ENCODE measurements at regions of chr22 and their contacts with region 1.

Region 1: DNA sequence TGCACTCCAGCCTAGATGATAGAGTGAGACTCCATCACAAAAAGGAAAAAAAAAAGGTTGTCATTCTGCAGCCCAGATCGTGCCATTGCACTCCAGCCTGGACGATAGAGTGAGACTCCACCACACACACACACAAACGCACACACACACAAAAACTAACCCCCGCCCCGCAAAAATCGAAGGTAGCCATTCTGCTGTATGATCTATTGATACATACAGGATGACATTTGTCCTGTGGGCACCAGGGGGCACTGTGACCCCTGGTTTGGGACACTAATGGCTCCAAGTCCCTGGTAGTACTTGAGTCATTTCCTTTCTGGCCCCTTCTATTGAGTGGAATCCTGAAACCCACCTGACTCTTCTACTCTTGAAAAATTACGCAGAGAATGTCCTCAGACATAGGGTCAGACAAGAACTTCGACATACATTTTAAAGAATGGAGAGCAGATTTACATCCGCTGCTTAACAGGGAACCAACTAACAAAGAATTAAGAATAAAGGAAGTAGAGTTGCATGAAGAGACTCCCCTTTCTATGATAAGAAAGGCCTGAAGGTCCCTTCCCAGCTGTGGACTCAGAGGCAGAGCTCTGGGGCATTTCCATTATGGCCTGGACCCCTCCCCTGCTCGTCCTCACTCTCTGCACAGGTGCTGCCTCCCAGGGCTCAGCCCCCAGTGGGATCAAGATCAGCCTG is 35.0 kb upstream of the PRAME start:
- DNase-seq: peak in 8 of 9 experiments; percentile 25 to 77 (median 48)
- ATAC-seq: peak; percentile 66
- H3K4me3 ChIP-seq: no peak overlapping the region
- H3K4me3 Mint-ChIP-seq: no peak overlapping the region
- H3K27ac ChIP-seq: no peak overlapping the region
- H3K27ac Mint-ChIP-seq: no peak overlapping the region
- H3K4me1 ChIP-seq: no peaks in the 10 kb centered on the region
- H3K4me1 Mint-ChIP-seq: peaks cover 4% of the 10 kb centered on the region
- H3K27me3 ChIP-seq: no peaks in the 10 kb centered on the region
- H3K27me3 Mint-ChIP-seq: peaks cover 7% of the 10 kb centered on the region
- CTCF ChIP-seq: peak; percentile 73

Region 2: DNA sequence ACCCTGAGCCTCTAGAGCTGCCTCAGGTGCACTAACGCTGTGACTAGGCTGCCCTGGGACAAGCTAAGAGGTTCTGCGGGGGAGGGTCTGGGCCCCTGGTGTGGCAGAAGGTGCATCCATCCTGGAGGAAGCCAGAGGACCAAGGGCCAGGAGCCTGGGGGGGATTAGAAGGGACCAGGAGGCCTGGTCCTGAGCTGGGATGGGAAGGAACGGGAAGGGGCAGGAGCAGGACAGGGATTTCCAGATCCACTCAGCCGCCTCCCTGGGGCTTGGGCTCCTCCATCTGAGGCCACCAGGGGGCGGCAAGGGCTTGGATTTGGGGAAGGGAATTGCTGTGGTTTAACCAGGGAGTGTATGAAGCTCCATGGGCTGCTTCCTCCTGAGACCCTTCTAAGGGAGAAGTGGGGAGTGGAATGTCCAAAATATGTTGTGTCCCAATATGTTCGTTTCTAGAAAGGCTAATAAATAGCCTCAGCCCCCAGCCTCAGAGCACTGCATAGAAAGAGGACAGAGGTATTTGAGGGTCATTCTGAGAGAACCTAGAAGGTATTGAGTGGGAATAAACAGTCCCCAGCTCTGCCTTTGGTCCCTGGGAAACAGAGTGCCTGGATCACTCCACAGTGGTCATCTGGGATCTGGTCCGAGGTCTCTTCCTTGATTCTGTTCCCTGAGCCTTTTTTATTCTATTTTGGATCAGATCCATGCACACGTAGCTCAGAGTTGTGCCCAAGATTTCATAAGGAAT is 17.7 kb before region 1 on chr22:
- CTCF ChIA-PET with region 1: interaction called, 87 read pairs
- POLR2A ChIA-PET with region 1: interaction called, 3 read pairs
- intact Hi-C with region 1: no loop called
- DNase-seq: peak in 5 of 9 experiments; percentile 5 to 39 (median 33)
- ATAC-seq: no peak
- H3K4me3 ChIP-seq: no peak overlapping the region
- H3K4me3 Mint-ChIP-seq: no peak overlapping the region
- H3K27ac ChIP-seq: no peak overlapping the region
- H3K27ac Mint-ChIP-seq: no peak overlapping the region
- H3K4me1 ChIP-seq: no peaks in the 10 kb centered on the region
- H3K4me1 Mint-ChIP-seq: no peaks in the 10 kb centered on the region
- H3K27me3 ChIP-seq: no peaks in the 10 kb centered on the region
- H3K27me3 Mint-ChIP-seq: peaks cover 13% of the 10 kb centered on the region
- CTCF ChIP-seq: peak; percentile 67

Region 3: DNA sequence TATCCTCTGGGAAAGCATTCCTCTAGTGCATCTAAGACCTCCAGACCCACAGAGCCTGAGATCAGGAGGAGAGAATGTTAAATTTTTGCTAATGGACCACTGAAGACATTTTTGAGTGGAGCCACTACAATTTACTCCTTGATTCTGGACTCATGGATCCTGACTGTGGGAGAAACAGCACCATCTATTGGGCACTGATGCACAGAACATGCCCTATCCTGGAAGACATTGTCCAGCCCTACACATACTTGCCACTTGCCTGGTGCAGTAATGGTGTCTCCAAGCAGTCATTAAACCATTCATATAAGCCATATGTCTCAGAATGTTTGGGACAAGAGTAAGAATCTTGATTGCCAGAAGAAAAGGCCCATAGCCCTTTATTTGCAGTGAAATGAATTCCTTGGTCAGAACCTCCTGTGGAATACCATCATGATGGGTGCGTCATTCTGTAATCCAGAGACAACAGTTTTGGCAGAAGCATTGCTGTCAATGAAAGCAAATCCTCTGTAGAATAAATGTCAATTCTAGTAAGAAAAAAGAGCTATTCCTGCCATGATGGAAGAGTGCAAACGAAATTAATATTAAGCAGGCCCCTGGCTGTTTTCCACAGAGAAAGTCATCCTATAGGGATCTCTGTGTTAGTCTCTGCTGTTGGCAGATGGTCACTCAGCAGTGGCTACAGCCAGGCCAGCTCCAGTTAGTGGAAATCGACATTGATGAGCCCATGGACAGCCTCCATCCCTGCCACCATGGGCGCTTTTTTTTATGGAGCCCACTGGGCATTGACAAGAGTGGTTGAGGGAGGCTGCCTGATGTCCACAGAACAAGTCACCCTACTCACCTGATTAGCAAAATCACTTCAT is 93.8 kb after region 1 on chr22:
- CTCF ChIA-PET with region 1: interaction called, 6 read pairs
- POLR2A ChIA-PET with region 1: no interaction called
- intact Hi-C with region 1: loop called (anchors 5 to 10 kb)
- DNase-seq: peak in 3 of 9 experiments; percentile 16 to 54 (median 45)
- ATAC-seq: no peak
- H3K4me3 ChIP-seq: no peak overlapping the region
- H3K4me3 Mint-ChIP-seq: no peak overlapping the region
- H3K27ac ChIP-seq: no peak overlapping the region
- H3K27ac Mint-ChIP-seq: no peak overlapping the region
- H3K4me1 ChIP-seq: no peaks in the 10 kb centered on the region
- H3K4me1 Mint-ChIP-seq: no peaks in the 10 kb centered on the region
- H3K27me3 ChIP-seq: no peaks in the 10 kb centered on the region
- H3K27me3 Mint-ChIP-seq: no peaks in the 10 kb centered on the region
- CTCF ChIP-seq: peak; percentile 31

Region 4: DNA sequence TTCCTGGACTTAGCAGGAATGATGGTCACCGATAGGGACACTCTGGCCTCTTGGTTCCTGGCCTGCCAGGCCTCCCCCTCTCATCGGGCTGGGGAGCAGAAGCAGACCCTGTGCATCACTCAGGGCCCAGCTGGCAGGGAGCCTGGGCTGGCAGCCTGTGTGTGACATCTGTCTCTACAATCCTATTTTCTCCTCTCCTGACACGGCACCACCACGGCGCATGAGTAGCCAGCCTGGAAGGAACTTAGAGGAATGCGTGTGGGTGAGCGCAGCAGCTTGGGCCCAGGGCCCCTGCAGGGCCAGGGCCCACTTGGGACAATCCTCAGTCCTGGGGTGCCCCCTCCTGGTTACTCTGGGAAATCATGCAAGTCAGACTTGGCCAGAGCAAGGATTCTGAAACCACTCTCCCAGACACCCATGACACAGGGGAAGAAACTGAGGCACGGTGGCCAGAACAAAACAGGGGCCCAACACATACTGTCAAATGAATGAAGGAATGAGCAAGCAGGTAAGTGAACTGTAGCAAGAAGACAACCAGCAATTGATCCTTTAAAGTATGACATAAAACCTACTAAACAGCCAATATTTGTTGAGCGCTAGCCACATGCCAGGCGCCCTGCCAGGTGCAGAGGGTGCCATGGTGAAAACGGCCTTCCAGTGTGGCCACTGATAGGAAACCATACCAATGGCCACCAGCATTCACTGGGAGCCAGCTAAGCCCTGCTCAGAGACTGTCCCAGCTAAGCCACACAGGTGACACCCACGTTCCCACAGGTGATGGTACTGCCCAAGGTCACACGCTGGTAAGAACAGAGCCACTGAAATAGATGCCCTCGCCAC is 534.4 kb after region 1 on chr22:
- CTCF ChIA-PET with region 1: no interaction called
- POLR2A ChIA-PET with region 1: no interaction called
- intact Hi-C with region 1: loop called in 1 of 2 experiments (anchors 5 kb)
- DNase-seq: peak; percentile 45 to 87 (median 78)
- ATAC-seq: peak; percentile 95
- H3K4me3 ChIP-seq: no peak overlapping the region
- H3K4me3 Mint-ChIP-seq: no peak overlapping the region
- H3K27ac ChIP-seq: no peak overlapping the region
- H3K27ac Mint-ChIP-seq: no peak overlapping the region
- H3K4me1 ChIP-seq: no peaks in the 10 kb centered on the region
- H3K4me1 Mint-ChIP-seq: peaks cover 3% of the 10 kb centered on the region
- H3K27me3 ChIP-seq: no peaks in the 10 kb centered on the region
- H3K27me3 Mint-ChIP-seq: no peaks in the 10 kb centered on the region
- CTCF ChIP-seq: peak; percentile 78

Measured in CD8-positive, alpha-beta T cell (primary cell).